Transverse colon (tissue), 4 donors: ENCODE measurements at regions of chr2 and their contacts with region 1.

Region 1: DNA sequence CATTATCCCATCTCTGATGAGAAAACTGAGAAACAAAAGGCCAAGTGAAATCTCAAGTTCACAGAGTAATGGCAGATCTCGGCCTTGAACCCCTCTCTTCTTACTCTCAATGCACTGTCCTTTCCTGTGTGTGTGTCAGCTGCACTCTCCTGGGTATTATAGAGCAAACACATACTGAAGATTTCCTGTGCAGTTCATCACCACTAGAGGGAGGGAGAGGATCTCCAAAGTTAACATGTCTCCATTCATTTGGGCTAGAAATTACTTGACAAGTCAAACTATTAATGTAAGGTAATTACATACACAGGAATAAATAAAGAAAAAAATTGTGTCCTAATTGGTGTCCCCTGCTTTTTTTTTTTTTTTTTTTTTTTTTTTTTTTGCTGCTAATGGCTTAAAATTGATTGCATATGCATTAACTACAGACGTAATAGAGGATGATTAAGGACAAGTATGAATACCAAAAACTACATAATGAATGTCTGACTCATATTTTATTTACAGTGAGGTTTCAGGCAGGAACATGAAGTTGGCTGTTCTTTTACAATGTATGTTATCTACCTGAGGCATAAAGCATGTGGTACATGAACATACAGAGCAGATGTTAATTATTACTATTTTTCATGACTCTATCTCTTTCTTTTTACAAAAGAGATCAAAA is 269.2 kb downstream of the NYAP2 start:
- DNase-seq: no peak
- H3K4me3 ChIP-seq: no peak overlapping the region
- H3K27ac ChIP-seq: no peak overlapping the region
- H3K4me1 ChIP-seq: no peaks in the 10 kb centered on the region
- H3K27me3 ChIP-seq: no peaks in the 10 kb centered on the region
- CTCF ChIP-seq: peak; percentile 55 to 61 (median 59)
- EP300 ChIP-seq: no peak
- POLR2A ChIP-seq: no peak

Region 2: GRCh38 chr2:224875841-224876240 is 792.9 kb before region 1 on chr2:
- in situ Hi-C with region 1: no loop called
- intact Hi-C with region 1: no loop called
- DNase-seq: no peak
- H3K4me3 ChIP-seq: no peak overlapping the region
- H3K27ac ChIP-seq: no peak overlapping the region
- H3K4me1 ChIP-seq: no peaks in the 10 kb centered on the region
- H3K27me3 ChIP-seq: no peaks in the 10 kb centered on the region
- CTCF ChIP-seq: no peak
- EP300 ChIP-seq: no peak
- POLR2A ChIP-seq: no peak

Region 3: DNA sequence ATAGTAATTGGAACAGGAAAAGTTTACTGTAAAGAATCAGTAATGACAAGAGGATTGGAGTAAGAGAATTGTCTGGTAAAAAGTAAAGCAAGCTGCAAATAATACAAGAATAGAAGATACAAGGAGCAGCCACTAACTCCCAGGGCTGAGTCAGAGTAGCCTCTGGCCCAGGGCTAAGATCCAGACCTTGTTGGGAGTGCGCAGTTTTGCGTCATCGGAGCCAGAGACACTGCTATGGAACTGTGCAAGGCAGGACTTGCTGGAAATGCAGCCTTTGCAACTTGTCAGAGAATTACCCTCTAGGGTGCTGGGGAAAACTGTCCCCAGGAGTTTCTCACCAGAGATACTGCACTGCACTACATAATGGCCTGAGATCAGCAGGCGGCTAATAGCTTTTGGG is 134.0 kb before region 1 on chr2:
- in situ Hi-C with region 1: no loop called
- intact Hi-C with region 1: no loop called
- DNase-seq: no peak
- H3K4me3 ChIP-seq: no peak overlapping the region
- H3K27ac ChIP-seq: no peak overlapping the region
- H3K4me1 ChIP-seq: no peaks in the 10 kb centered on the region
- H3K27me3 ChIP-seq: no peaks in the 10 kb centered on the region
- CTCF ChIP-seq: no peak
- EP300 ChIP-seq: no peak
- POLR2A ChIP-seq: no peak

Region 4: GRCh38 chr2:225889446-225889850 is 220.7 kb after region 1 on chr2:
- in situ Hi-C with region 1: no loop called
- intact Hi-C with region 1: loop called (anchors 10 kb)
- DNase-seq: no peak
- H3K4me3 ChIP-seq: no peak overlapping the region
- H3K27ac ChIP-seq: no peak overlapping the region
- H3K4me1 ChIP-seq: no peaks in the 10 kb centered on the region
- H3K27me3 ChIP-seq: no peaks in the 10 kb centered on the region
- CTCF ChIP-seq: peak; percentile 64 to 79 (median 73)
- EP300 ChIP-seq: no peak
- POLR2A ChIP-seq: no peak

Region 5: GRCh38 chr2:226977775-226978190 is 1309.0 kb after region 1 on chr2:
- in situ Hi-C with region 1: loop called in 3 of 4 experiments (anchors 10 to 25 kb)
- intact Hi-C with region 1: no loop called
- DNase-seq: no peak
- H3K4me3 ChIP-seq: no peak overlapping the region
- H3K27ac ChIP-seq: no peak overlapping the region
- H3K4me1 ChIP-seq: no peaks in the 10 kb centered on the region
- H3K27me3 ChIP-seq: no peaks in the 10 kb centered on the region
- CTCF ChIP-seq: no peak
- EP300 ChIP-seq: no peak
- POLR2A ChIP-seq: no peak

Region 6: GRCh38 chr2:226984750-226985582 is 1316.2 kb after region 1 on chr2:
- in situ Hi-C with region 1: loop called in 3 of 4 experiments (anchors 5 to 25 kb)
- intact Hi-C with region 1: loop called (anchors 2 kb)
- DNase-seq: peak; percentile 15
- H3K4me3 ChIP-seq: no peak overlapping the region
- H3K27ac ChIP-seq: peak overlapping the region in 3 of 4 donors; percentile 4 to 34 (median 31)
- H3K4me1 ChIP-seq: peaks cover 0 to 7% (median 2%) of the 10 kb centered on the region in 4 donors
- H3K27me3 ChIP-seq: no peaks in the 10 kb centered on the region
- CTCF ChIP-seq: peak; percentile 64 to 70 (median 68)
- EP300 ChIP-seq: no peak
- POLR2A ChIP-seq: no peak